Endothelial cell of umbilical vein (primary cell): ENCODE measurements at regions of chr1 and their contacts with region 1.

Region 1: DNA sequence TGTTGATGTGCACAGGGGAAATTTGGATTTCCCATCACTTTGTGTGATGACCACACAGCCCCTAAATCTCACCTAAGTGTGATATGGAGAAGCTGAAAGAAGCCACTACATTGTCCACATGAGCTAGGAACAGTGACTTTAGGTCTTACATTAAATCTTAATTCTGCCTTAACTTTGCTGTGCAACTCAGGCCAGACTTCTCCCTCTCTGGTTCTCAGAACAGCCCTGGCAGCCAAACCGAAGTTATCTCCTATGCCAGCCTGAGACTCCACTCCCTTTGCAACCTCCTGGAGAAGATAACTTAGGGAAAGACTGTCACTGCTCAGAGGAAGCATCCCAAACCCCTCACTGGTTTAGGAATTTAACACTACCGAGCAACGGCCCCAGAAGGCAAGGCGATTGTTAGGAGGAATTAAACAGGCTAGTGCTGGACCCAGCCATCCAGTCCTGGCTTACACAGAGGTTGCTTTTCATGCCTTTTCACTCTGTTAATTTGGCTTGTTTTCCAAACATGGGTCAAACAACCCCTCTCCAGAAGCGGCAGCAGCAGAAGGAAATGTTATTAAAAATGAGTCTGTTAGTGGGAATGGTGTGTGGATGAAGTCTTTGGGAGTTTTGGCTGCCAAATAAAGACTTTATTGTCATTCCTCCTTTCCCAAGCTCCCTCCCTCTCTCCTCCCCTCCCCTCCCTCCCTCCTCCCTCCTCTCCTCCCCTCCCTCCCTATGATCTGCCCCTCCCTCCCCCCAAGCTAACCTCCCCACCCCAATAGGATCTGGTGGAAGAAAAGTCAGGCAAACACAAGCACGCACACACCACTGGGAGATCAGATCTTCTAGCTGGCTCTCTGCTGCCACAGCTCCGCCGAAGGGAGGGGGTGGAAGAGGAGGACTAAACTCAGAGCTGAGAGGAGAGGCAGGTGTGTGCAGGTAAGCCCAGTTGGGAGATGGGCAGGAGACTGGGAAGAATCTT is at the start of gene PRELP:
- DNase-seq: no peak
- H3K4me3 ChIP-seq: no peak within 1 kb of the TSS
- H3K27ac ChIP-seq: no peak within 1 kb of the TSS
- H3K4me1 ChIP-seq: peaks cover 2% of the 10 kb centered on the region
- H3K27me3 ChIP-seq: peaks cover 27 to 38% of the 10 kb centered on the region in 2 experiments
- CTCF ChIP-seq: no peak
- POLR2A ChIP-seq: no peak
- total RNA-seq, gene PRELP: not detected in 2 replicates

Region 2: GRCh38 chr1:203486618-203487370 is 11.5 kb after region 1 on chr1:
- CTCF ChIA-PET with region 1: interaction called, 13 read pairs
- POLR2A ChIA-PET with region 1: no interaction called
- dilution Hi-C with region 1: no loop called
- intact Hi-C with region 1: no loop called
- DNase-seq: no peak
- H3K4me3 ChIP-seq: peak overlapping the region in 2 of 3 experiments; percentile 37 to 38
- H3K27ac ChIP-seq: peak overlapping the region; percentile 52
- H3K4me1 ChIP-seq: no peaks in the 10 kb centered on the region
- H3K27me3 ChIP-seq: peaks cover 5 to 8% of the 10 kb centered on the region in 2 experiments
- CTCF ChIP-seq: no peak
- POLR2A ChIP-seq: no peak